Activated B cell treated with CpG ODN at 0.5 μM for 24 hours (primary cell): ENCODE measurements at regions of chrX and their contacts with region 1.

Region 1: DNA sequence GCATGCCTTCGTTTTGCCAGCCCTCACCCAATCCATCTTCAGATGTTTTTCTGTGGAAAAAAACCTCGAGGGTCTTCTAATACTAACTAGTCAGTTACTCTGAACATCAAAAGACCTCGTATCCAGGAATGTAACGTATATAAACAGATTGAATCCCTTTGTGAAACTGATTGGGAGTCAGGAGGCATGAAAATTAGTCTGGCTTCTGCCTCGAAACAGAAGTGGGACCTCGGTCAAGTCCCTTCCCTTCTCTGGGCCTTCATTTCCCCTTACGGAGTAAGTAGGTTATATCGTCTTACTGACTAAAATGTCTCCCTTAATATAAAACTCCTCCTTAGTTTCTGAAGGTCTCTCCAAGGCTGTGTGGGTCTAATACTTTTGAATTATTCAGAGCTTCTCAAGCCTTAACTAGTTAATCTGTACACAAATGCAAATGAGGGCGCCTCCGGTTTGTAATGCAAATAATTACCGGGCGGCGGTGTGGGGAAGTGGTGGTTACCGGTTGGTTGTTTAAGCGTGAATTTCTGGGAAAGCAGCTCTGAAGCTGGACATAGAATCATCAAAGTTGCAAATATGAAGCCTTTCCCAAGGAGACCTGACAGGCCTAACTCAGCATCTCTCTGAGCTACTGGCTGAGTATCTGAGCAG is 11.4 kb upstream of the NKRF start:
- DNase-seq: no peak
- ATAC-seq: peak; percentile 56
- H3K4me3 Mint-ChIP-seq: peak overlapping the region; percentile 72
- H3K27ac Mint-ChIP-seq: peak overlapping the region; percentile 90
- H3K4me1 Mint-ChIP-seq: peaks cover 77% of the 10 kb centered on the region
- H3K27me3 Mint-ChIP-seq: no peaks in the 10 kb centered on the region
- CTCF ChIP-seq: no peak

Region 2: DNA sequence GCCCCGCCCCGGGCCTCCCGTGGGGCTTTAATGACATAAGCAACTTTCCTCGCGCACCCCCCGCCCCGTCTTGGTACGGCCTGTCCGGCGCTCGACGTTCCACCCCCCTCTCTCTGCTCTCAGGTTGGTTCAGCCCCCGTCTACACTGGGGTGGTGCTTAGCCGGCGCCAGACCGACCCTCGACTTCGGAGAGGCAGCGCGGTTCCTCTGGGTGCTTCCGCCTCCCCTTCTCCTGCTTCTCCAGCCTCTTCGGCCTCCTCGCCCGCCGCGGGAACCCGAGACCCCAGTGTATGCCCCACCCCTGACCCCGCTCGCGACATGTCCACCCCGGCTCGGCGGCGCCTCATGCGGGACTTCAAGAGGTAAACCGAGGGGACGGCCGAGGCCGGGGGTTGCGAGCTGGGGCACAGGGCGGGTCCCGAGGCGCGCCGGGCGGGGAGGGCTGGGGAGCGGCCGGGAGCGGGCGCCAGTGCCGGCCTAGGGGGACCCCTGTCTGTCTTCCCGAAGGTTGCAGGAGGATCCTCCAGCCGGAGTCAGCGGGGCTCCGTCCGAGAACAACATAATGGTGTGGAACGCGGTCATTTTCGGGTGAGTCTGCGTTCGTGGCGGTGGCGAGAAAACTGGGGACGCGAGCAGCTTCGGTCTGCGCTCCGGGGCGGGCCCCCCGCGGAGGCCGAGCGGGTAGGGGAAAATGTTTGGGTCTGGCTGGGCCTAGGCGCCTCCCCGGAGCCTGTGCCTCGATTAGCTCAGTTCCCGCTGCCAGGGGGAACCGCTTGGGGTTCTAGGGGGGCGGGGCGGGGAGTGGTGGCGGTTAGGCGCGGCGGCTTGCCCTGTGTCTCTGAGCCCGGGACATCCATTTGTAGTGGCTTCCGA is 43.0 kb before region 1 on chrX and contains the start of gene UBE2A:
- CTCF ChIA-PET with region 1: interaction called, 3 read pairs
- POLR2A ChIA-PET with region 1: interaction called, 17 read pairs
- intact Hi-C with region 1: no loop called
- DNase-seq: peak; percentile 78
- ATAC-seq: peak; percentile 94
- H3K4me3 Mint-ChIP-seq: peak within 1 kb of the TSS; percentile 93
- H3K27ac Mint-ChIP-seq: peak within 1 kb of the TSS; percentile 91
- H3K4me1 Mint-ChIP-seq: peaks cover 38% of the 10 kb centered on the region
- H3K27me3 Mint-ChIP-seq: no peaks in the 10 kb centered on the region
- CTCF ChIP-seq: no peak
- total RNA-seq, gene UBE2A: 65.9 and 73.5 TPM in 2 replicates

Region 3: DNA sequence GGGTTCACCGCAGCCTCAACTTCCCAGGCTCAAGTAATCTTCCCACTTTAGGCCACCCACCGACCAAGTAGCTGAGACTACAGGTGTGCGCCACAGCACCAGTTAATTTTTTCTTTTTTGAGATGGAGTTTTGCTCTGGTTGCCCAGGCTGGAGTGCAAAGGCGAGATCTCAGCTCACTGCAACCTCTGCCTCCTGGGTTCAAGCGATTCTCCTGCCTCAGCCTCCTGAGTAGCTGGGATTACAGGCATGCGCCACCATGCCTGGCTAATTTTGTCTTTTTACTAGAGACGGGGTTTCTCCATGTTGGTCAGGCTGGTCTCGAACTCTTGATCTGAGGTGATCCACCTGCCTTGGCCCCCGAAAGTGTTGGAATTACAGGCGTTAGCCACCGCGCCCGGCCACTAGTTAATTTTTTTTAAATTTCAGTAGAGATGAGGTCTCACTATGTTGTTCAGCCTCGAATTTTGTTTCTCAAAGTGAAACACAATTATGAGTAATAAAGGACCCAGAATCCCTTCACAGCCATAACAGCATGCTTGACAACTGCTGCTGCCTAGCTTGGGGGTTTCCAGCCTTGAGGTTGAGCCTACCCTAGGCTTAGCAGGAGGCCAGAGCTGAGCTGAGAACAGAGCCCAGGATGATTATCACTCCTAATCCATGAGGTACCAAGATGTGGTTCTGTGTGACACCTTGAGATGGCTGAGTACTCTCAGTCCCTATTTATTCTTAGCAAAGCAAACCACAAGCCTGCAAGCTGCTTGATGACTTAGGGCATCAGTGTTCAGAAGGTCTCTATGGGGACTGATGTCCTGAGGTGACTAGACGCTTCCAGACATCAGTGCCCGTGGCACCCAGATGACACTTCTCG is 30.1 kb after region 1 on chrX:
- CTCF ChIA-PET with region 1: interaction called, 4 read pairs
- POLR2A ChIA-PET with region 1: interaction called, 18 read pairs
- intact Hi-C with region 1: no loop called
- DNase-seq: no peak
- ATAC-seq: peak; percentile 89
- H3K4me3 Mint-ChIP-seq: peak overlapping the region; percentile 45
- H3K27ac Mint-ChIP-seq: peak overlapping the region; percentile 93
- H3K4me1 Mint-ChIP-seq: peaks cover 28% of the 10 kb centered on the region
- H3K27me3 Mint-ChIP-seq: no peaks in the 10 kb centered on the region
- CTCF ChIP-seq: no peak

Region 4: GRCh38 chrX:119693040-119693995 is 75.7 kb after region 1 on chrX and contains the start of gene SEPTIN6:
- CTCF ChIA-PET with region 1: interaction called, 4 read pairs
- POLR2A ChIA-PET with region 1: interaction called, 34 read pairs
- intact Hi-C with region 1: no loop called
- DNase-seq: peak; percentile 70
- ATAC-seq: peak; percentile 71
- H3K4me3 Mint-ChIP-seq: peak within 1 kb of the TSS; percentile 97
- H3K27ac Mint-ChIP-seq: peak within 1 kb of the TSS; percentile 94
- H3K4me1 Mint-ChIP-seq: peaks cover 71% of the 10 kb centered on the region
- H3K27me3 Mint-ChIP-seq: no peaks in the 10 kb centered on the region
- CTCF ChIP-seq: no peak
- total RNA-seq, gene SEPTIN6: 330 and 338 TPM in 2 replicates

Region 5: GRCh38 chrX:119775517-119776238 is 158.0 kb after region 1 on chrX:
- CTCF ChIA-PET with region 1: no interaction called
- POLR2A ChIA-PET with region 1: no interaction called
- intact Hi-C with region 1: loop called (anchors 2 kb)
- DNase-seq: no peak
- ATAC-seq: peak; percentile 21
- H3K4me3 Mint-ChIP-seq: peak overlapping the region; percentile 28
- H3K27ac Mint-ChIP-seq: peak overlapping the region; percentile 85
- H3K4me1 Mint-ChIP-seq: peaks cover 27% of the 10 kb centered on the region
- H3K27me3 Mint-ChIP-seq: no peaks in the 10 kb centered on the region
- CTCF ChIP-seq: no peak